ENCODE measurements at regions of chr20 and their contacts with region 1.

Region 1: GRCh38 chr20:50303573-50304501 is 113.2 kb downstream of the CEBPB start:
- DNase-seq: no peak
- H3K4me3 ChIP-seq: no peak overlapping the region
- H3K27ac ChIP-seq: no peak overlapping the region
- H3K4me1 ChIP-seq: peaks cover 0 to 6% (median 2%) of the 10 kb centered on the region in 4 experiments; a peak in 5 of 7 replicates
- H3K27me3 ChIP-seq: no peaks in the 10 kb centered on the region
- CTCF ChIP-seq: no peak
- EP300 ChIP-seq: no peak
- POLR2A ChIP-seq: no peak
- RAD21 ChIP-seq: no peak

Region 2: GRCh38 chr20:49859846-49860245 is 444.0 kb before region 1 on chr20:
- CTCF ChIA-PET with region 1: no interaction called
- POLR2A ChIA-PET with region 1: no interaction called
- DNase-seq: no peak
- H3K4me3 ChIP-seq: no peak overlapping the region
- H3K27ac ChIP-seq: no peak overlapping the region
- H3K4me1 ChIP-seq: no peaks in the 10 kb centered on the region
- H3K27me3 ChIP-seq: no peaks in the 10 kb centered on the region
- CTCF ChIP-seq: no peak
- EP300 ChIP-seq: no peak
- POLR2A ChIP-seq: no peak
- RAD21 ChIP-seq: no peak

Region 3: DNA sequence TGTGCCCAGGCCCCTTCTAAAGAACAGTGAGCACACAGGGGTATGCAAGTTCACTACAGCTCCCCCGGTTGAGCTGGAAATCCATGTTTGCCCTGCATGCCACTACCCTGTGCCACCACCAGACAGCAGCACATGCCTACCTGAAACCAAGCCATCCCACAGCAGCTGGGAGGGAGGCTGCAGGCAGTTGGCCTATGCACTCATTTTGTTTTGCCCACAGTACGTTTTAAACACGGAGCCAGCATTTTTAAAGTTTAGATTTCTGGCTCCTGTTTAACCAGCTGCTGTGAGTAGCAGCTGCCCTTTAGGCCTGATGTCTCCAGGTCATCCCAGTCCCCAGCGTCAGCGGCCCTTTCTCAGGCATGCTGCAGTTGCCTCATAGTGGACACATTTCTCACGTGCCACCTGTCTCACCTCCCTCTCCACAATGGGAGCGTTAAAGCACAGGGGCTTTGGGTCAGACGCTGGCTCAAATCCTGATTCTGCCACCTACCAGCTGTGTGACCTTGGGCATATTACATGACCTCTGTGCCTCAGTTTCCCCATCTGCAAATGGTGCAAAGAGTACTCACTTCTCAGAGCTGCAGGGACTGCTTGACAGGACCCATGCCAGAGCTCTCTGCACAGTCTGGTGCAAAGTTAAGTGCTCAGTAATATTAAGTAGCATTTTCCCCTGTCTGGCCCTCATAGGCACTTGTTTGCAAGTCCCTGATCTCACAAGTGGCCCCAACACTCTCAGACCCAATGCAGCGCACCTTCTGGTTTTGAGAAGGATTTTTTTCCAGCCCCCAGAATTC is 182.7 kb before region 1 on chr20:
- CTCF ChIA-PET with region 1: no interaction called
- POLR2A ChIA-PET with region 1: no interaction called
- DNase-seq: peak; percentile 56 to 66
- H3K4me3 ChIP-seq: no peak overlapping the region
- H3K27ac ChIP-seq: no peak overlapping the region
- H3K4me1 ChIP-seq: peaks cover 0 to 5% (median 1%) of the 10 kb centered on the region in 4 experiments; a peak in 3 of 7 replicates
- H3K27me3 ChIP-seq: no peaks in the 10 kb centered on the region
- CTCF ChIP-seq: peak; percentile 96 to 100 (median 97)
- EP300 ChIP-seq: no peak
- POLR2A ChIP-seq: no peak
- RAD21 ChIP-seq: peak; percentile 95 to 98

Region 4: GRCh38 chr20:50292324-50293243 is 11.3 kb before region 1 on chr20:
- CTCF ChIA-PET with region 1: interaction called, 20 read pairs
- POLR2A ChIA-PET with region 1: interaction called, 8 read pairs
- DNase-seq: no peak
- H3K4me3 ChIP-seq: no peak overlapping the region
- H3K27ac ChIP-seq: no peak overlapping the region
- H3K4me1 ChIP-seq: peaks cover 0 to 4% (median 0%) of the 10 kb centered on the region in 4 experiments; a peak in 4 of 7 replicates
- H3K27me3 ChIP-seq: no peaks in the 10 kb centered on the region
- CTCF ChIP-seq: no peak
- EP300 ChIP-seq: no peak
- POLR2A ChIP-seq: no peak
- RAD21 ChIP-seq: no peak